ENCODE measurements at regions of chr18 and their contacts with region 1.

Region 1: GRCh38 chr18:26350961-26351360 is 124.7 kb downstream of the TAF4B start:
- DNase-seq: no peak
- H3K4me3 ChIP-seq: no peak overlapping the region
- H3K27ac ChIP-seq: no peak overlapping the region
- H3K4me1 ChIP-seq: no peaks in the 10 kb centered on the region
- H3K27me3 ChIP-seq: no peaks in the 10 kb centered on the region
- CTCF ChIP-seq: no peak
- POLR2A ChIP-seq: no peak

Region 2: GRCh38 chr18:26017929-26018328 is 333.0 kb before region 1 on chr18:
- intact Hi-C with region 1: no loop called
- DNase-seq: no peak
- H3K4me3 ChIP-seq: no peak overlapping the region
- H3K27ac ChIP-seq: no peak overlapping the region
- H3K4me1 ChIP-seq: no peaks in the 10 kb centered on the region
- H3K27me3 ChIP-seq: no peaks in the 10 kb centered on the region
- CTCF ChIP-seq: no peak
- POLR2A ChIP-seq: no peak

Region 3: GRCh38 chr18:26332991-26333390 is 18.0 kb before region 1 on chr18:
- intact Hi-C with region 1: loop called (anchors 2 kb)
- DNase-seq: no peak
- H3K4me3 ChIP-seq: no peak overlapping the region
- H3K27ac ChIP-seq: no peak overlapping the region
- H3K4me1 ChIP-seq: peaks cover 27% of the 10 kb centered on the region
- H3K27me3 ChIP-seq: no peaks in the 10 kb centered on the region
- CTCF ChIP-seq: no peak
- POLR2A ChIP-seq: no peak

Region 4: GRCh38 chr18:26526128-26526965 is 175.4 kb after region 1 on chr18:
- intact Hi-C with region 1: no loop called
- DNase-seq: no peak
- H3K4me3 ChIP-seq: no peak overlapping the region
- H3K27ac ChIP-seq: no peak overlapping the region
- H3K4me1 ChIP-seq: peaks cover 10% of the 10 kb centered on the region
- H3K27me3 ChIP-seq: no peaks in the 10 kb centered on the region
- CTCF ChIP-seq: no peak
- POLR2A ChIP-seq: no peak